ENCODE measurements at regions of chr1 and their contacts with region 1.

Region 1: GRCh38 chr1:52404116-52404986 is at the starts of genes ORC1 and PRPF38A:
- DNase-seq: peak; percentile 99
- ATAC-seq: peak; percentile 92
- H3K4me3 Mint-ChIP-seq: peak within 1 kb of the TSS; percentile 98
- H3K27ac Mint-ChIP-seq: peak within 1 kb of the TSS; percentile 99
- H3K4me1 Mint-ChIP-seq: peaks cover 45% of the 10 kb centered on the region
- H3K27me3 Mint-ChIP-seq: no peaks in the 10 kb centered on the region
- total RNA-seq, gene ORC1: 51.0 to 57.9 TPM
- total RNA-seq, gene PRPF38A: 88.9 to 103 TPM

Region 2: DNA sequence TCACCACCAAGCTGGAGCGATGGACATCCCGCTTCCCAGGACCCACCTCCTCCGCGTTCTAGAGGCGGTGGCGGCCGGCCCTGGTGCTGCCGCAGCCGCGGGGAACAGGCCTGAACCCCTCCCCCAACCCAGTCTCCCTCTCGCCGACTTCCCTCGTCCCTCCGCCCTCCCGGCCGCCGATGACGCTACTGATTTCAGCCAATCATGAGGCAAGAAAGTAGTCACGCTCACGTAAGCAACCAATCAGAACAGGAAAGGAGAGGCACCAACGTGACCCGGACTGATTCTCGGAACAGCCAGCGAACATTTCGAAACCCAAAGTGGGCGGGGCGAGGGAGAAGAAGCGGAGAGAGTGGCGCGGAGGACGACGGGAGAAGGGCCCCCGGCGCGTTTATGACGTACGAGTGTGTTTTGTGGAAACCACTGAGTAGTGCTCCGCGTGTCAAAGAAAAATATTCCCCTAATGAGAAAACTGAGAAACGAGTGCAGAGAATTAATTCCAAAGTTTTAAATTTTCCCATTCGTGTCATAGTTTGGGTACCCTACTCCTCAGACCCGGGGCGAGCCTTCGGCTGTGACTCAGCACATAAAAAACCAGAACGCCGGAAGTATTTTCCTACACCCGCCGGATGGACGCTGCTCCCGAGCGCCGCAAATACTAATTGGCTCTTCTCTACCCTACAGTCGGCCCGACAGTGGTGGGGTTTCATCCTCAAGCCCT is 525.6 kb before region 1 on chr1 and contains the start of gene NRDC:
- CTCF ChIA-PET with region 1: no interaction called
- POLR2A ChIA-PET with region 1: no interaction called
- intact Hi-C with region 1: loop called in 1 of 2 experiments (anchors 1 kb)
- DNase-seq: peak; percentile 100
- ATAC-seq: peak; percentile 95
- H3K4me3 Mint-ChIP-seq: no peak within 1 kb of the TSS
- H3K27ac Mint-ChIP-seq: no peak within 1 kb of the TSS
- H3K4me1 Mint-ChIP-seq: peaks cover 27% of the 10 kb centered on the region
- H3K27me3 Mint-ChIP-seq: peaks cover 12% of the 10 kb centered on the region
- total RNA-seq, gene NRDC: 149 to 186 TPM

Region 3: DNA sequence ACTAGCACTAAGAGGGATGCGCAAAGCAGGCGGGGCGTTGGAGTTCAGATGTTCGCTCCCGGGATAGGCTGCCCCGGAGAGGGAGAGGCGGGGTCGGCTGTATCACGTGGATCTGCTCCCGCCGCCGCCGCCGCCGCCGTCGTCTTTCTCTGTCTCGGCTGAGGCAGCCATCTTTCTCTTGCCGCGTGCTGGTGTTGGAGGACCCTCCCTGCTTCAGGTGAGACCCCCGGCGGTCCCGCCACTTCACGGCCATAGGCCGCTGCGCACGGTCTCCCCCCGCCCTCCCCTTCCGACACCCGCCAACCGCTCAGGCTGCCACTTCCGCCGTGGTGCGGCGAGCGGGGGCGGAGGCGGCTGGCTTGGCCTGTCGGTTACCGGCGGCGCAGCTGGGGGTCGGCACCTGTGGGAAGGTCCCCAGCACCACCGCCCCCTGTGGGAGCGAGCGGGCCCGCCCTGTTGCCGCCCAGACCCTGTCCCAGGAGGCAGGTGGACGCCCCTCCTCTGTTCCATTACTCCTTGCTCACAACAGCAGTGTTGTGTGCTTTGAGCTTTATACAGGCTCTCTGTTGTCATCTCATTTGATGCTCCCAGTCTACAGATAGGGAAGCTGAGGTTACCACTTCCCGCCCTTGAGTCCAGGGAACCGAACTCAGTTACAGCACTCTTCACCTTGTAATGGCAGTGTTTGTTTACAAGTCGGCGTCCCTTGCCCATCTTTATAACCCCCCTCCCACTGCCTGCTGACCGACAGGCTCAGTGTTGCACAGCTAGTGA is 348.0 kb before region 1 on chr1 and contains the start of gene BTF3L4:
- CTCF ChIA-PET with region 1: no interaction called
- POLR2A ChIA-PET with region 1: interaction called, 3 read pairs
- intact Hi-C with region 1: loop called (anchors 1 to 10 kb)
- DNase-seq: peak; percentile 98
- ATAC-seq: peak; percentile 96
- H3K4me3 Mint-ChIP-seq: peak within 1 kb of the TSS; percentile 91
- H3K27ac Mint-ChIP-seq: peak within 1 kb of the TSS; percentile 99
- H3K4me1 Mint-ChIP-seq: peaks cover 40% of the 10 kb centered on the region
- H3K27me3 Mint-ChIP-seq: no peaks in the 10 kb centered on the region
- total RNA-seq, gene BTF3L4: 33.8 to 37.8 TPM

Region 4: GRCh38 chr1:52210044-52210443 is 194.3 kb before region 1 on chr1:
- CTCF ChIA-PET with region 1: no interaction called
- POLR2A ChIA-PET with region 1: no interaction called
- intact Hi-C with region 1: no loop called
- DNase-seq: no peak
- ATAC-seq: peak; percentile 58
- H3K4me3 Mint-ChIP-seq: no peak overlapping the region
- H3K27ac Mint-ChIP-seq: peak overlapping the region; percentile 39
- H3K4me1 Mint-ChIP-seq: peaks cover 26% of the 10 kb centered on the region
- H3K27me3 Mint-ChIP-seq: no peaks in the 10 kb centered on the region

Region 5: GRCh38 chr1:52288286-52288685 is 116.1 kb before region 1 on chr1:
- CTCF ChIA-PET with region 1: no interaction called
- POLR2A ChIA-PET with region 1: no interaction called
- intact Hi-C with region 1: no loop called
- DNase-seq: no peak
- ATAC-seq: no peak
- H3K4me3 Mint-ChIP-seq: no peak overlapping the region
- H3K27ac Mint-ChIP-seq: no peak overlapping the region
- H3K4me1 Mint-ChIP-seq: no peaks in the 10 kb centered on the region
- H3K27me3 Mint-ChIP-seq: no peaks in the 10 kb centered on the region

Region 6: GRCh38 chr1:52520148-52520547 is 115.8 kb after region 1 on chr1:
- CTCF ChIA-PET with region 1: no interaction called
- POLR2A ChIA-PET with region 1: no interaction called
- intact Hi-C with region 1: loop called in 1 of 2 experiments (anchors 1 kb)
- DNase-seq: no peak
- ATAC-seq: peak; percentile 99
- H3K4me3 Mint-ChIP-seq: no peak overlapping the region
- H3K27ac Mint-ChIP-seq: peak overlapping the region; percentile 91
- H3K4me1 Mint-ChIP-seq: peaks cover 36% of the 10 kb centered on the region
- H3K27me3 Mint-ChIP-seq: no peaks in the 10 kb centered on the region

Region 7: DNA sequence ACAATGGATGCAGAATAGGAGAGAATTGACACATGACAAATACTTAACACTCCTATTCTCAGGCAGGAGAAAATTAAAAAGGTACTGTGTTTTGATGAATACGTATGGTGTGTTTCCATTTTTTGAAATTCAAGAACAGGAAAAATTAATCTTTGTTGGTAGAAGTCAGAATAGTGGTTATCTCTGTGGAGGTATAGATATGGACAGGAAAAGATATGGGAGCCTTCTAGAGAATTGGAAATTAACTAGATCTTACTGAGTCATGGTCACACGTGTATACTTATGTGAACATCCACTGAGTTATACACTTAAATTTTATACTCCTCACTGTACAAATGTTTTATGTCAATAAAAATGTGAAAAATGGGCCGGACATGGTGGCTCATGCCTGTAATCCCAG is 158.4 kb after region 1 on chr1:
- CTCF ChIA-PET with region 1: no interaction called
- POLR2A ChIA-PET with region 1: no interaction called
- intact Hi-C with region 1: no loop called
- DNase-seq: no peak
- ATAC-seq: no peak
- H3K4me3 Mint-ChIP-seq: no peak overlapping the region
- H3K27ac Mint-ChIP-seq: no peak overlapping the region
- H3K4me1 Mint-ChIP-seq: no peaks in the 10 kb centered on the region
- H3K27me3 Mint-ChIP-seq: no peaks in the 10 kb centered on the region

Region 8: DNA sequence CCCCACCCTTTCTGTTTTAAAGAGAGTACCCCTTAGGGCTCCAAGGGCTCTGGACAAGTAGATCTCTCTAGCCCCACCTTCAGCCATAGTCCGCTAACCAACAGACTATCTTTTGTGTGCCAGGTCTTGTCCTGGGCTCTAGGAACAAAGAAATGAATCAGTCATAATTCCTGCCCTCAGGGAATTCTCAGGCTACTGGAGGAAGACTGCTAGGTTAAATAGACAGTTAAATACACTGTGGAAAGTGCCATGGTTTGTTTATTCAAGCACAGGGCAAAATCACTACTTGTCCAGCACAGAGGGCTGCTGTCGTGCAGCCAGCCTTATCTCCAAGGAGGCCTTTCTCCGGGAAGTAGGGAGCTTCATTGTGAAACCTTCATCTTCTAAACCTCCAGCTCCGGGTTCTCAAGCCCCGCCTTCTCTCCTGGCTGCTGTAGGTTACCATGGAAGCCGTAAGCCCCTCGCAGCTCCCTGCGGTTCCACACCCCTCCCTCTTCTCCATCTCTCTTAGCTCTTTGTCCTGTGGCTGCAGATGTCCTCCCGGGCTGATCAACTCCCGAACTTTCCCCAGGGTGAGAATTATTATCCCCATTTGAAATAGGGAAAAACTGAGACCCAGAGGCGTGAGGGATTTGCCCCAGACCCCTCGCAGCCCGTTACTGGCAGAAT is 258.4 kb after region 1 on chr1:
- CTCF ChIA-PET with region 1: interaction called, 5 read pairs
- POLR2A ChIA-PET with region 1: no interaction called
- intact Hi-C with region 1: loop called in 1 of 2 experiments (anchors 1 kb)
- DNase-seq: no peak
- ATAC-seq: no peak
- H3K4me3 Mint-ChIP-seq: no peak overlapping the region
- H3K27ac Mint-ChIP-seq: no peak overlapping the region
- H3K4me1 Mint-ChIP-seq: peaks cover 16% of the 10 kb centered on the region
- H3K27me3 Mint-ChIP-seq: no peaks in the 10 kb centered on the region

Region 9: DNA sequence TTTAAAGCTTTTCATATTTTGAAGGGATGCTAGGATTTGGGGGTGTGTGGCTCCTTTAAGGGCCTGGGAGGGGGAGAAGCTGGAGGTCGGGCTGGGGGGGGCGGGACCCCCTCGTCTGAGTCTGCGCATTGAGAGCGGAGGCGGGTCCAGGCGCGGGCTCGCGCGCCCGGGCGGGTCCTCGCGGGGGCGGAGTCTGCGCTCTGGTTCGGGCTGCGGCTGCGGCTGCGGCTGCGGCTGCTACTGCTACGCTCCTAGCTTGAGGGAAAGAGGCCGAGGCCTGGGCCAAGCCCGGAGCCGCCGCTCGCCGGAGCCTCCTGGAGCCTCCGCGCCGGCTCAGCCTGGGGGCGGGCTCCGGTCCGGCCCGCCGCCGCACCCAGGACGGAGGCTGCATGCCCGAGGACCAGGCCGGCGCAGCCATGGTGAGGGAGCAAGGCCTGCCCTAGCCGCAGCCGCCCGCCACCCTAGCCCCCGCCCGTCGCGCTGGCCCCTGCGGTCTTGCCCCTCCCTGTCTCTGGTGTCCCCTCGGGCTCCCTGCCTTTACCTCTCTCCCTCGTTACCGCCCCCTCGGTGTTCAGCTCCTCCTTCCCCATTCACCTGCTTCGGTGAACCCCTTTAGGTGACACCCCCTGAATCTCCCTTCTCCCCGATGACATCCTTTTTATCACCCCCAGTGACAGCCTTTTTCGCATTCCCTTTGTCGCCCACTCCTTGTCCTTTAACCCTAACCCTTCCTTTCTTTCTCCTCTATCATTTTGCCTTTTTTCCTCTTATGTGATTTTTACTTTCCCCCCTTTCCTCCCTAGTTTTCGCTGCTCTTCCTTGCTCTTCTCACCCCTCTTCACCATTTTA is 322.1 kb after region 1 on chr1 and contains the start of gene ZYG11B:
- CTCF ChIA-PET with region 1: interaction called, 3 read pairs
- POLR2A ChIA-PET with region 1: interaction called, 5 read pairs
- intact Hi-C with region 1: loop called in 1 of 2 experiments (anchors 1 kb)
- DNase-seq: peak; percentile 96
- ATAC-seq: peak; percentile 91
- H3K4me3 Mint-ChIP-seq: peak within 1 kb of the TSS; percentile 93
- H3K27ac Mint-ChIP-seq: peak within 1 kb of the TSS; percentile 85
- H3K4me1 Mint-ChIP-seq: peaks cover 32% of the 10 kb centered on the region
- H3K27me3 Mint-ChIP-seq: no peaks in the 10 kb centered on the region
- total RNA-seq, gene ZYG11B: 12.9 to 14.3 TPM

Region 10: DNA sequence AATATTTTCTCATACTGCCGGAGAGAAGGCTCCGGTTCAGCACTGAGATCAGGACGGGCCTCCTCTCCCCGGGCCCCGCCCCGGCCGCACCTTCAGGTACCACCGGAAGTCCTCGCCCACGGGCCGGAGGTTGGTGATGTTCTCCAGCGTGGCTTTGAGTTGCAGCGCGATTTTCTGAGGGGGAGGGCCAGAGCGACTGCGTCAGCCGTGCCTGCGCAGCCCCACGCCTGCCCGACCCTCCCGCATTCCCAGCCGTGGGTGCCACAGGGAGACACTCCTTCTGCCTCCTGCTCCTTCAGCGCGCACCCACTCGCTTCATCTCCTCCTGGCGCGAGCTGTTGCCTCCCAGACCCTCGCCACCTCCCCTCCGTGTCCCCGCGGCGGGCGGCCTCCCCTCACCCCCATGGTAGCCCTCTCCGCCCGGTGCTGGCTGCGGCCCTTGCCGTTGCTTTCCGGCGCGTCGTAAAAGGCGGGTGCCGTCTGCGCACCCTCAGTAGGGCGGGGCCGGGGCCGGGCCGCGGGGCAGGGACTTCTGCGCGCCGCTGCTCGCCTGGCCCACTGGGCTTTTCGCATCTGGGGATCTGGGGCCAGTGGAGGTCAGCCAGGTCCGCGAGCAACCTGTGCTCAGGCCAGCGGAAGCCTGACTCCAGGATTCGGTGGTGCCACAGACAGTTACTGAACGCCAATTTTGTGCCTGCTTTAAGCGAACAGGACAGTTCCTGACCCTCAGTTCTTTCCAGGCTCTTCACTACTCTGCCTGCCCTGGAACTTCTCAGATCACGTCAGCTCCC is 816.0 kb after region 1 on chr1 and contains the start of gene CZIB:
- CTCF ChIA-PET with region 1: no interaction called
- POLR2A ChIA-PET with region 1: no interaction called
- intact Hi-C with region 1: loop called in 1 of 2 experiments (anchors 1 kb)
- DNase-seq: peak; percentile 98
- ATAC-seq: peak; percentile 95
- H3K4me3 Mint-ChIP-seq: peak within 1 kb of the TSS; percentile 87
- H3K27ac Mint-ChIP-seq: peak within 1 kb of the TSS; percentile 94
- H3K4me1 Mint-ChIP-seq: peaks cover 24% of the 10 kb centered on the region
- H3K27me3 Mint-ChIP-seq: no peaks in the 10 kb centered on the region
- total RNA-seq, gene CZIB: 45.4 to 48.7 TPM

Measured in activated CD4-positive, alpha-beta T cell treated with anti-CD3 and anti-CD28 coated beads for 36 hours (primary cell).